B cell (primary cell): ENCODE measurements at regions of chr6 and their contacts with region 1.

Region 1: DNA sequence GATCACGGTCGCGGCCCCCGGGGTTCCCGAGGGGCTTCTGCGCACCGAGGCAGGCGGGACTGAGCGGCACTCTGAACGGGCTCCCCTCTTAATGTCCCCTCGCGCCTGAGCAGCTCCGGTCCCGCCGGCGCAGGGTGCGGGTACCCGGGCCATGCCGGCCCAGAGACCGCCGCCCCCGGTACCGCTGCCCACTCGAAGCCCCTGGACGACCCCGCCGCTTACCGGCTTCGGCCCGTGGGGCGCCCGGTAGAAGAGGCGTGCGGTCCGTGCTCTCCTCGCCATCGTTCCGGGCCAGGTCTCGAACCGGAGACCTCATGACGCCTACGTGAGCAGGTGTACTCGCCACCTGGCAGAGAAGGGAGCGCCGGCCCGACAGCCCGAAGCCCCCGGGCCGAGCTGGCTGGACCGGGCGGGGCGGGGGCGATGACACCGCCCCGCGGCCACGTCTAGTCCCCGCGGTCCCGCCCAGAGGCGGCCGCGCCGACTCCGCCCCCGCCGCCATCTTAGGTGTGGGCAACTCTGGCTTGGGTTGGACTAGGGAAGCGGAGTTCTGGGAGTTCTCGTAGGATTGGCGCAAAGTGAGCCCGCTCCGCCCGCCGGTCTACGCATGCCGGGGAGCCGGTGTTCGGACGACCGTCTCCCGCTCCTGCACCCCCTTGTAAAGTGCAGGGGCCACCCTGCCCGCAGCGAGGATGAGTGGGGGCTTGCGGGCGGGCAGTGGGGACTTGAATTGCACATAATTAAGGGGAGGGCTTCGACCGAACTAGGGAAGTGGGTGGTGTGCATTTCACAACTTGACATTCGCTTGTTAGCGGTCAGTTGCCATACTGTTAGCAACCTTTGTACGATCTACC is at the start of gene SLC17A5:
- DNase-seq: peak; percentile 94
- ATAC-seq: peak; percentile 88
- H3K4me3 ChIP-seq: peak within 1 kb of the TSS; percentile 72 to 99 (median 91)
- H3K4me3 Mint-ChIP-seq: peak within 1 kb of the TSS; percentile 100
- H3K27ac ChIP-seq: peak within 1 kb of the TSS; percentile 96 to 97
- H3K27ac Mint-ChIP-seq: peak within 1 kb of the TSS; percentile 99
- H3K4me1 ChIP-seq: peaks cover 8 to 14% of the 10 kb centered on the region in 2 donors
- H3K4me1 Mint-ChIP-seq: peaks cover 23% of the 10 kb centered on the region
- H3K27me3 ChIP-seq: no peaks in the 10 kb centered on the region
- H3K27me3 Mint-ChIP-seq: no peaks in the 10 kb centered on the region
- CTCF ChIP-seq: no peak
- total RNA-seq, gene SLC17A5: 8.0 and 8.2 TPM in 2 replicates

Region 2: GRCh38 chr6:73461537-73462350 is 192.1 kb before region 1 on chr6 and contains the start of gene MTO1:
- CTCF ChIA-PET with region 1: interaction called, 10 read pairs
- POLR2A ChIA-PET with region 1: interaction called, 11 read pairs
- intact Hi-C with region 1: no loop called
- DNase-seq: peak; percentile 91
- ATAC-seq: peak; percentile 94
- H3K4me3 ChIP-seq: peak within 1 kb of the TSS; percentile 66 to 99 (median 78)
- H3K4me3 Mint-ChIP-seq: peak within 1 kb of the TSS; percentile 100
- H3K27ac ChIP-seq: peak within 1 kb of the TSS; percentile 90 to 96
- H3K27ac Mint-ChIP-seq: peak within 1 kb of the TSS; percentile 97
- H3K4me1 ChIP-seq: peaks cover 12 to 31% of the 10 kb centered on the region in 2 donors
- H3K4me1 Mint-ChIP-seq: peaks cover 29% of the 10 kb centered on the region
- H3K27me3 ChIP-seq: no peaks in the 10 kb centered on the region
- H3K27me3 Mint-ChIP-seq: no peaks in the 10 kb centered on the region
- CTCF ChIP-seq: no peak
- total RNA-seq, gene MTO1: 79.5 and 84.4 TPM in 2 replicates

Region 3: DNA sequence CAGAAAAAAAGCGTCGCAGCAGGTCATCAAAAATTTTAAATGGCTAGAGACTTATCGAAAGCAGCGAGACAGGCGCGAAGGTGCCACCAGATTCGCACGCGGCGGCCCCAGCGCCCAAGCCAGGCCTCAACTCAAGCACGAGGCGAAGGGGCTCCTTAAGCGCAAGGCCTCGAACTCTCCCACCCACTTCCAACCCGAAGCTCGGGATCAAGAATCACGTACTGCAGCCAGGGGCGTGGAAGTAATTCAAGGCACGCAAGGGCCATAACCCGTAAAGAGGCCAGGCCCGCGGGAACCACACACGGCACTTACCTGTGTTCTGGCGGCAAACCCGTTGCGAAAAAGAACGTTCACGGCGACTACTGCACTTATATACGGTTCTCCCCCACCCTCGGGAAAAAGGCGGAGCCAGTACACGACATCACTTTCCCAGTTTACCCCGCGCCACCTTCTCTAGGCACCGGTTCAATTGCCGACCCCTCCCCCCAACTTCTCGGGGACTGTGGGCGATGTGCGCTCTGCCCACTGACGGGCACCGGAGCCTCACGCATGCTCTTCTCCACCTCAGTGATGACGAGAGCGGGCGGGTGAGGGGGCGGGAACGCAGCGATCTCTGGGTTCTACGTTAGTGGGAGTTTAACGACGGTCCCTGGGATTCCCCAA is 133.0 kb before region 1 on chr6 and contains the start of gene EEF1A1:
- CTCF ChIA-PET with region 1: interaction called, 46 read pairs
- POLR2A ChIA-PET with region 1: interaction called, 49 read pairs
- intact Hi-C with region 1: loop called (anchors 1 kb)
- DNase-seq: peak; percentile 100
- ATAC-seq: peak; percentile 82
- H3K4me3 ChIP-seq: peak within 1 kb of the TSS; percentile 87 to 100 (median 98)
- H3K4me3 Mint-ChIP-seq: peak within 1 kb of the TSS; percentile 97
- H3K27ac ChIP-seq: peak within 1 kb of the TSS; percentile 98 to 99
- H3K27ac Mint-ChIP-seq: peak within 1 kb of the TSS; percentile 95
- H3K4me1 ChIP-seq: peaks cover 53 to 67% of the 10 kb centered on the region in 2 donors
- H3K4me1 Mint-ChIP-seq: peaks cover 66% of the 10 kb centered on the region
- H3K27me3 ChIP-seq: no peaks in the 10 kb centered on the region
- H3K27me3 Mint-ChIP-seq: no peaks in the 10 kb centered on the region
- CTCF ChIP-seq: no peak
- total RNA-seq, gene EEF1A1: 12,449 and 12,769 TPM in 2 replicates

Region 4: GRCh38 chr6:73585566-73586415 is 68.0 kb before region 1 on chr6:
- CTCF ChIA-PET with region 1: interaction called, 7 read pairs
- POLR2A ChIA-PET with region 1: interaction called, 11 read pairs
- intact Hi-C with region 1: loop called (anchors 1 kb)
- DNase-seq: peak; percentile 83
- ATAC-seq: peak; percentile 76
- H3K4me3 ChIP-seq: peak overlapping the region; percentile 17 to 65 (median 36)
- H3K4me3 Mint-ChIP-seq: peak overlapping the region; percentile 83
- H3K27ac ChIP-seq: peak overlapping the region; percentile 93 to 98
- H3K27ac Mint-ChIP-seq: peak overlapping the region; percentile 99
- H3K4me1 ChIP-seq: peaks cover 21 to 33% of the 10 kb centered on the region in 2 donors
- H3K4me1 Mint-ChIP-seq: peaks cover 19% of the 10 kb centered on the region
- H3K27me3 ChIP-seq: no peaks in the 10 kb centered on the region
- H3K27me3 Mint-ChIP-seq: no peaks in the 10 kb centered on the region
- CTCF ChIP-seq: no peak

Region 5: DNA sequence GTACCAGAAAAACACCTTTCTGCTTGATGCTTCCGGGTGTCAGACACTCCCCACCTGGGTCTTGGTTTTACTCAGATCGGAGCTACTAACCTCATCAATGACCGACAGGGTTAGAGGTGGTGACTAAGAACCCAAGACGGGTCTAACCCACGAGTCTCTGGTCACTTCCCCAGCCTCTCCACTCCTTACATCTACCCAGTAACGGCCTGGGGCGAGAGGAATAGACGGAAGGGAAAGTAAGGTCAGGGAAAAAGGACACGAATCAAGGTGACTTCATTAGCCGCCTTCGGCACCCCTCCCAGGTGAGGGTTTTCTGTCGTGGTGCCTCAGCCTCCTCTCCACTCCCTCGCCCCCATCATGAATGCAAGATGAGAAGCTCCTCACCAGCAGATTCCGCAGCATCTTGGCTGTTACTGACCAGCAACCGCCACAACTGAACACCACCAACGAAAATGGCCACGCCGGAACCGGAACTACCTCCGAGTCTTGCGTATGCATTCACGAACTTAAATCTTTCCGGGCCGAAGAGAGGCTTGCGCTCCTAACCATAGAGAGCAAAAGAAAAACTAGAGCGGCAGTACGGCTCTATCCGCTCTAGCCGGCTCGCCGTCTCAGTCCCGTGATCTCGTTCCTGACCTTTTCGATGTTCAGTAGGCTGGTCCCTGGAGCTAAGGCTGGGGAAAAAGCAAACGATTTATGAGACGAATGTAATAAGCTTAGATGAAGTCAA is 1589.7 kb after region 1 on chr6 and contains the start of gene COX7A2:
- CTCF ChIA-PET with region 1: no interaction called
- POLR2A ChIA-PET with region 1: no interaction called
- intact Hi-C with region 1: loop called (anchors 1 kb)
- DNase-seq: peak; percentile 92
- ATAC-seq: peak; percentile 98
- H3K4me3 ChIP-seq: peak within 1 kb of the TSS; percentile 85 to 98 (median 90)
- H3K4me3 Mint-ChIP-seq: peak within 1 kb of the TSS; percentile 99
- H3K27ac ChIP-seq: peak within 1 kb of the TSS; percentile 92 to 97
- H3K27ac Mint-ChIP-seq: peak within 1 kb of the TSS; percentile 98
- H3K4me1 ChIP-seq: peaks cover 5 to 10% of the 10 kb centered on the region in 2 donors
- H3K4me1 Mint-ChIP-seq: peaks cover 24% of the 10 kb centered on the region
- H3K27me3 ChIP-seq: peaks cover 0 to 14% (median 4%) of the 10 kb centered on the region in 4 experiments
- H3K27me3 Mint-ChIP-seq: peaks cover 16% of the 10 kb centered on the region
- CTCF ChIP-seq: no peak
- total RNA-seq, gene COX7A2: 157 and 160 TPM in 2 replicates

Region 6: DNA sequence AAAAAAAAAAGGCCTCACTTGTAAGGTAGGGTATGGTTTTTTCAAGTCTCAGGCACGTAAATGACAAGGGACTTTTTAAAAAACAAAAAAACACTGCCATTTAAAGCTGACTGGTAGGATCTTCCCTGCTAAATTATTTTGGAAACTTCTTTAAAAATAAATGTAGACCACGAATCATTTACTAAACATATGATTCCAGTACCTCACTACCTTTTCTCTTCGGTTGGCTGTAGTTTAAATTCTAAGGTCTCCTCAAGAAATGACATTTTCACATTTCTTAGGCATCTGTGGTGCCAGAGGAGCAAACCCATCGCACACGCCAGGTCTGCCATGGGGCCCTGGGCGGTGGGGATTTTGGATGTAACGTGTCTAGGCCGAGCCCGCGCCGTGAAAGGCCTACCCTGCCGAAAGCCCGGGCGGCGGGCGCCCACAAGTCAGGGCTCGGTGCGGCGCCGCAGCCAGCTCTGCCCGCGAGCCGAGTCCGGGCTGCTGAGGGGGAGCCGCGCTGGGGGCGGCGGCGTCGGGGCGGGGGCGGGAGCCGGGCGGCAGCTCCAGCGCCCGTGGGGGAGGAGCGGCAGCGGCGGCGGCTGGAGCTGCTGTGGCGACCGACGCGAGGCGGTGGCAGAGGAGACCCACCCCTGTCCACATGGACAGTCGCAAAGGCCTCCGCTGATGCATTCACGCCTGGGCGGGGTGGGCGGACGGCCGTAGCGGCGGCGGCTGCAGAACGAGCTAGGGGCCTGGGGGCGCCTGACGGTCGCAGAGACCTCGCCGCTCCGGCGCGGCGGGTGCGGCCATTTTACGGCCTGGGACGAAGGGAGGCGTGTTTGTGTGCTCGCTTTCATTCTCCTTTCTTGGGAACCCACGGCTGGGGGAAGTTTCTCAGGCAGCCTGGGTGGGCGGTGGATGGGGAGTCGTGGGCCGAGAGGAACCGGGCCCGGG is 1947.8 kb after region 1 on chr6 and contains the start of gene SENP6:
- CTCF ChIA-PET with region 1: no interaction called
- POLR2A ChIA-PET with region 1: interaction called, 5 read pairs
- intact Hi-C with region 1: loop called (anchors 5 kb)
- DNase-seq: peak; percentile 93
- ATAC-seq: peak; percentile 80
- H3K4me3 ChIP-seq: peak within 1 kb of the TSS; percentile 84 to 99 (median 92)
- H3K4me3 Mint-ChIP-seq: peak within 1 kb of the TSS; percentile 94
- H3K27ac ChIP-seq: peak within 1 kb of the TSS; percentile 92 to 97
- H3K27ac Mint-ChIP-seq: peak within 1 kb of the TSS; percentile 98
- H3K4me1 ChIP-seq: peaks cover 36 to 44% of the 10 kb centered on the region in 2 donors
- H3K4me1 Mint-ChIP-seq: peaks cover 62% of the 10 kb centered on the region
- H3K27me3 ChIP-seq: no peaks in the 10 kb centered on the region
- H3K27me3 Mint-ChIP-seq: no peaks in the 10 kb centered on the region
- CTCF ChIP-seq: no peak
- total RNA-seq, gene SENP6: 161 and 178 TPM in 2 replicates